ENCODE measurements at regions of chr6 and their contacts with region 1.

Region 1: DNA sequence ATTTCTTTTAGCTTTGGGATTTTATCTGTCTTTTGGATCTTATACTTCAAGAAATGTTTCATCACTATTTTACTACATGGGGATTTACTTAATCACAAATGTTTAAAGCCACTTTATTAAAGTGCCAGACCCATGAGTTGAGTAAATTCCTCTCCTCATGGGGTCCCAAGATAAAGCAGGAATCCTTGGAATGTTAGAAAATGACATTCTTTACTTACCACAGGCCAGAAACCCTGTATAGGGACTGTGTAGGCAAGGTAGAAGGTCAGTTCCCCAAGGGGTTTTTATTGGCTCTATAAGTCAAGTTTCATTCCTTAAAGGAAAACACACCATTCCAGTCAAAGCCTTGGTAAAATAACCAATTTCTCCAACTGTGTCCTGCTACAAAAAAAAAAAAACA is 28.4 kb upstream of the OR2J2 start:
- DNase-seq: no peak
- H3K4me3 ChIP-seq: no peak overlapping the region
- H3K27ac ChIP-seq: no peak overlapping the region
- H3K4me1 ChIP-seq: no peaks in the 10 kb centered on the region
- H3K27me3 ChIP-seq: no peaks in the 10 kb centered on the region
- CTCF ChIP-seq: no peak
- EP300 ChIP-seq: no peak
- POLR2A ChIP-seq: no peak

Region 2: DNA sequence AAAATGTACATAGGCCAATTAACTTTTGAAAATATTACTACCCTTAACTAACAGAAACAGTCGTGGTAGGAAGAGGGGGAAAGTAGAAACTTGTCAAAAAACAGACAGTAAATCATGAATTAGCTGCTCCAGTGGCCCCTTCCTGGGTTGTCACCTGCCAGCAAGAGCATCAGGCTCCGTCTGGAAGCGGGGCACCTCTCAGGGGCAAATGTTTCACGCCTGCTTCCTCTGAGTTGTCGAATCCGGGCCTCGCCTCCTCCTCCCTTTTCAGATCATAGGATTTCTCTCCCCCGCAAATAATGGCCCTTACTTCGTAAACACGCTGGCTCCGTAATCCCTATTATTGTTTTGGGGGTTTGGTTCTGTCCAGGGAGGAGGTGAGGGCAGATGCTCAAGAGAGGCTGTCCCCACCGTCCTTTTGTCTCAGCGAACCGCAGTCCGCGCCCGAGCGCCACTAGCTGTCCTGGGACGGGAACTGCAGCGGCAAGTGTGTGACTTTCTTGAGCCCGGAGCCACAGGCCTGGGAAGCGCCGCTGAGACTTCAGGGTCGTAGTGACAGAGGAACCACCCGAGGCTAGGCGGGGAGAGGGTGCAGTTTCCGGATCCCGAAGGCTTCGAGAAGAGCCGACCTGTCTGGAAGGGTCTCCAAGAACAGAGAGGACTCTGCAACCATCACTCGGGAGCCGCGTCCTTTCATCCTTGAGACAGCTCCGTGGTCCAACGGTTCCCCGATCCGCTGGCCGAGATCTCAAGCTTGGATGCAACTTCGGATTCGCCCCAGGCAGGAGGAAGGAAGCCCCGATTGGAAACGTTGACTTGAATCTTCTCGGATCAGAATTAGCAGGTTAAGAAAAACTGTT is 1455.0 kb before region 1 on chr6:
- intact Hi-C with region 1: no loop called
- DNase-seq: peak; percentile 78 to 82 (median 81)
- H3K4me3 ChIP-seq: peak overlapping the region; percentile 39
- H3K27ac ChIP-seq: peak overlapping the region; percentile 48 to 74
- H3K4me1 ChIP-seq: peaks cover 1% of the 10 kb centered on the region
- H3K27me3 ChIP-seq: no peaks in the 10 kb centered on the region
- CTCF ChIP-seq: peak; percentile 56 to 68 (median 57)
- EP300 ChIP-seq: no peak
- POLR2A ChIP-seq: no peak

Region 3: DNA sequence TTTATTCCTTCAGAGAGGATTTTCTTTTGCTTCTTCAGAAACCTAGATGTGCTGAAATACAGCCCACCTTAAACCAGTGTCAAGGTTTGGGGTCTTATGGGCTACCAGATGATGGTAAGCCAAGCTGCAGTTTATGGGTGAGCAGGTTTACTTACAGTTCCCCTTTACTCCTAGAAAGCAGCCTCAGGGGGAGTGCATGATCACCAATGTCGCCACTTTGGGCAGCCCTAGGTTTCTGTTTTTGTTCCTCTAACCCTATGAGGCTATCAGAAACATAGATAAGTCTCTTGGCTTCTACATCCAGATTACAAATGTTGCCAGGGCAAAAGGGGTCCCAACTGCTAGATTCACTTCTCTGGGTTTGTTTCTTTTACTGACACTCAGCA is 285.7 kb before region 1 on chr6:
- intact Hi-C with region 1: no loop called
- DNase-seq: no peak
- H3K4me3 ChIP-seq: no peak overlapping the region
- H3K27ac ChIP-seq: no peak overlapping the region
- H3K4me1 ChIP-seq: no peaks in the 10 kb centered on the region
- H3K27me3 ChIP-seq: no peaks in the 10 kb centered on the region
- CTCF ChIP-seq: no peak
- EP300 ChIP-seq: no peak
- POLR2A ChIP-seq: no peak

Region 4: GRCh38 chr6:29045075-29045474 is 97.3 kb before region 1 on chr6 and contains the start of gene OR2W1:
- intact Hi-C with region 1: loop called in 1 of 4 experiments (anchors 5 kb)
- DNase-seq: no peak
- H3K4me3 ChIP-seq: no peak within 1 kb of the TSS
- H3K27ac ChIP-seq: no peak within 1 kb of the TSS
- H3K4me1 ChIP-seq: no peaks in the 10 kb centered on the region
- H3K27me3 ChIP-seq: no peaks in the 10 kb centered on the region
- CTCF ChIP-seq: no peak
- EP300 ChIP-seq: no peak
- POLR2A ChIP-seq: no peak
- total RNA-seq, gene OR2W1: not detected

Region 5: DNA sequence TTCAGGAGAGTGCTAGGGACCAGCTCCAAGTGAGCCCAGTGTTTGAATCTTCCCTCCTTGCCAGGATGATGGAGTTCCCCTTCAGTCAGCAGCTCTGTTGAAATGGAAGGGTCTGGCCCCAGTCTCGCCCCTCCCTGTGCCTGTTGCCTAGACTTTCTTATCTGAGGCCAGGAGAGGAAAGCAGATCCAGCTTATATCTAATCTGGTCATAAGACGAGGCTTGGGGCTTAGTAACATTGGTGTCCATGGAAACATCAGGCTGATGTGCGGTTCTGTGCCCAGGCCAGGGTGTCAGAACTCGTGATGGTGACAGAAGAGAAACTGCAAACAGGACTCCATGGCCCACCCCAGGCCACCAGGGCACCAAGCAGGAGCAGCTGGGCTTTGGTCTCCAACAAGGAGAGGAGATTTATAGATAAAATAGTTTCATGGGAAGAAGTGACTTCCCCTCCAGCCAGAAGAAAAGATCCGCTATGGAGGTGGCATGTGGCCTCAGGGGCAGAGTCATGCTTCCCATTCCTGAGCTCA is 335.6 kb after region 1 on chr6:
- intact Hi-C with region 1: no loop called
- DNase-seq: no peak
- H3K4me3 ChIP-seq: no peak overlapping the region
- H3K27ac ChIP-seq: no peak overlapping the region
- H3K4me1 ChIP-seq: no peaks in the 10 kb centered on the region
- H3K27me3 ChIP-seq: no peaks in the 10 kb centered on the region
- CTCF ChIP-seq: no peak
- EP300 ChIP-seq: no peak
- POLR2A ChIP-seq: no peak